Ascending aorta (tissue), 2 donors: ENCODE measurements at regions of chr19 and their contacts with region 1.

Region 1: DNA sequence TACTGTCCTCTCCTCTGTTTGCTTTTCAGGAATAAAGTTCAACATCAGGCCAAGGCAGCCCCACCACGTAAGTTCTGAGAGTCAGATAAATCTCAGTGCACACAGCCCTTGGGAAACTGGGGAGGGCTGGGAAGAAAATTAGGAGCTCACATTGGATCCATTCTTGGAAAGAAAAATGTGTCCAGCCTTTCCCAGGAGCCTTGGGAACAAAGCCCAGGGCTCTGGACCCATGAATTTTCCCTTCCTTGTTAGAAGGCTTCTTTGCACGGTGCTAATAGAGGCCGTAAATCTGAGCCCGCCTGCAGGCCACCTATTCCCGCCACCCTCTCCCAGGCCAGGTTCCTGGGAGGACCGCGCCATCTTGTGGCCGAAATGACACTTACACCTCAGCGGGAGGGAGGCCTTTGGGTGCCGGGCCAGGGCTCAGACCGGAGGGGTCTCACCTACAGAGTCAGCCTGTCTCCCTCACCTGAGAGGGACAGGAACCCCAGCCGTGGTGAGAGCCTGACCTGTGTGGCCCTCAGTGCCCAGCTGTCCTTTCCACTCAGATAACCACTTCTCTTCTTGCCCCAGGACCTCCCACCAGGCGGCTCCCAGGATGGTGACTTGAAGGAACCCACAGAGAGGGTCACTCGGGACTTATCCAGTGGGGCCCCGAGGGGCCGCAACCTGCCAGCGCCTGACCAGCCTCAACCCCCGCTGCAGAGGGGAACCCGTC is 25.1 kb upstream of the KCTD15 start:
- DNase-seq: no peak
- H3K4me3 ChIP-seq: no peak overlapping the region
- H3K27ac ChIP-seq: no peak overlapping the region
- H3K4me1 ChIP-seq: no peaks in the 10 kb centered on the region
- H3K27me3 ChIP-seq: no peaks in the 10 kb centered on the region
- CTCF ChIP-seq: peak; percentile 42 to 70 (median 55)

Region 2: DNA sequence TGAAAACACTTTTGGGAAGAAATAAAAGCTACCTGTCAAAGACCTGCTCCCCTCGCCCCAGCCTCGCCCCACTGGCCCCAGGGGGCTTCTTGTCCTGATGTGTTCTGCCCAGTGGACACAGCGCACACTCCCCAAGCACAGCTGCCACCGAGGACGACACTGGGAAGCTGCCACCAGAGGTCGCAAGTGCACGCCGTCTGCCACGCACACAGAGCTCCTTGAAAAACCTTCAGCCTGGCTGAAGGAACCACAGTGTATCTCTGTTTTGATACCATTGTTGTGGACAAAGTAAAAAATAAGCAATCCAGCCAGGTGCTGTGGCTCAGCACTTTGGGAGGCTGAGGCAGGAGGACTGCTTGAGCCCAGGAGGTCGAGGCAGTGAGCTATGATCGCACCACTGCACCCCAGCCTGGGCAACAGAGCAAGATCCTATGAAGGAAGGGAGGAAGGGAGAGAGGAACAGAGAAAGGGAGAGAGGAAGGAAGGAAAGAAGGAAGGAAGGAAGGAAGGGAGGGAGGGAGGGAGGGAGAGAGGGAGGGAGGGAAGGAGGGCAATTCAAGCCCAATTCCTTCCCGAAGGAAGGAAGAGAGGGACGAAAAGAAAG is 340.8 kb before region 1 on chr19:
- intact Hi-C with region 1: loop called (anchors 1 kb)
- DNase-seq: no peak
- H3K4me3 ChIP-seq: no peak overlapping the region
- H3K27ac ChIP-seq: no peak overlapping the region
- H3K4me1 ChIP-seq: no peaks in the 10 kb centered on the region
- H3K27me3 ChIP-seq: no peaks in the 10 kb centered on the region
- CTCF ChIP-seq: peak; percentile 24 to 61 (median 39)

Region 3: DNA sequence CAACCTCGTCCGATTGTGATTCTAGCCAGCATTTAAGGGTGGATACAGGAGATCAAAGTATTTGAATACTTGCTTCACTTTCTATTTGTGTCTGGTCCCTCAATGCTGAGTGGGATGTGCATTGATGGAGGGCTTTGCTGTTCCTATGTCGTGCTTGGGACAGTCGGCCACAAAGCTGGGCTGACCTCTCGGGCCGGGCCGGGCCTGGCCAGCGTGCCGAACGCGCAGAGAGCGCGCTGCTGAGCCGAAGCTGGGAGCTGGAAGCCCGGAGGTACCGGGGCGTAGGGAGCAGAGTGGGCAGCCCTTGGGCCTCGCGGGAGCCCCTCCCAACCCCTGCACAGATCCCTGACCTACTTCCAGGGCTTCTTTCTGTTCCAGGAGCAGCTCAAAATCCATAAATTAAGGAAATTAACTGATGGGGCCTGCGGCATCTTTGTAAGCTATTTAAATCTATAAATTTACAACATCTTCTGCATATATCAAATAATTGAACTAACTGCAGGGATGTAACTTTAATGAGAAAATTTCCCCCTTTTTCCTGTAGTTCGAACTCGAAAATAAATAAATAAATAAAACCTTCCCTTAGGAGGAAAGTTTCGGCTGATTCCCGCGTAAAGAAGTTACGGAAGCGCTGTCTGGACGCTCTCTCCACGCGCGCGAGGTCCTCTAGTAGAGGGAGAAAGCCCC is 23.3 kb after region 1 on chr19:
- intact Hi-C with region 1: no loop called
- DNase-seq: no peak
- H3K4me3 ChIP-seq: peak overlapping the region; percentile 77 to 93
- H3K27ac ChIP-seq: peak overlapping the region; percentile 93 to 96
- H3K4me1 ChIP-seq: peaks cover 4 to 6% of the 10 kb centered on the region in 2 donors
- H3K27me3 ChIP-seq: no peaks in the 10 kb centered on the region
- CTCF ChIP-seq: no peak